A673 (cell line): ENCODE measurements at regions of chr11 and their contacts with region 1.

Region 1: DNA sequence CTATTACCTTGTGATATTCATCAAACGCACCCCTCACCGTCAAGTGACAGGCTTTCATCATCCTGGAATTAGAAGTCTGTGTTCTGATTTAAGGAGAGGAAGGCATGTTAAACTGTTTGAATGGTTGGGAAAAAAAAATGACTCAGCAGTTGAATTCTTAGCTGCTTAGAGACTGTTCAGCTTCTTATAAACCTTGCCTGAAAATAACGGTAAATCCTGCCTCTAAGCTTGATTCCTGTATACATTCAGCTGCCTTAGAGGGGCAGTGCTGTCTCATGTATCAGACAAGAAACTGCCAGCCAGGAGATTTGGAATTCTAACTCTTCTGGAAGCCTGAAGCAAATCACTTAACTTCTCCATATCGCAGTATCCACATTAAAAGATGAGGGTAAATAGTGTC is 437.4 kb downstream of the JRKL start:
- DNase-seq: peak; percentile 26
- H3K4me3 ChIP-seq: no peak overlapping the region
- H3K27ac ChIP-seq: no peak overlapping the region
- H3K4me1 ChIP-seq: no peaks in the 10 kb centered on the region
- H3K27me3 ChIP-seq: no peaks in the 10 kb centered on the region
- CTCF ChIP-seq: peak; percentile 48; the same call in 1 of the 2 replicates

Region 2: DNA sequence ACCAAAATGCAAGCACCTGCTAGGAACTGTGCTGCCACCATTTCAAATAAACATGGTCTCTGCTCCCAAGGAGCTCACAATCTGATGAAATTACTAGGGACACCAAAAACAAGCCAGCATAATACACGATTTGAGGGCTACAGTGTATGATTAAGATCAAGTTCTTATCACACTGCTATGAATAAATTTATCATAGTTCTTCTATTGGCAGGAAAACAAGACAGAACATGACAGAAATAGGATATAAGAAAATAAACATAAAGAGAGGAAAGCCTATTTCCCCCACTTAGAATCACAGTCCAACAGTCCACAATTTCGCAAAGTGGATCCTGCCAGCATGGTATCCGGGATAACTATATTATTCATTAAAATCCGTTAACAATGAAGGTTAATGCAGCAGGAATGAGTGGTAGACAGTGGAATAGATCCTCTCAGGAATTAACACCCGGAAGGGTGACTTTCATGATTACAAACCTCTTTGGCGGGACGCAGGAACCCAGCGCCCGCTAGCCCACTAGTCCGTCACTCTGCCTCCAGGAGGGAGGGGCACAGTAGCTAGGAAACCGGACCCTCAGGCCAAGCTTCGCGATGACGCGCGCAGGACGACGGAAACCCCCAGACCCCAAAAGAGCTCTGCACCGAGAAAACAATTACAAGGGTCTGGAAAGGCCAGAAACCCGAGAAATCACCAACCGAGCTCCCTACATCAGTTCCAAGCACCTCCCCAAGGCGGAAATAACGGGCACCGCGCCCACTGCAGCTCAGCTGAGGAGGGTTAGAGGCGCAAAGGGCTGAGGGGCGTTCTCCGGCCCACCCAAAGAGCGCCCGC is 438.1 kb before region 1 on chr11:
- CTCF ChIA-PET with region 1: no interaction called
- POLR2A ChIA-PET with region 1: no interaction called
- intact Hi-C with region 1: no loop called
- DNase-seq: no peak
- H3K4me3 ChIP-seq: peak overlapping the region; percentile 74
- H3K27ac ChIP-seq: peak overlapping the region; percentile 88
- H3K4me1 ChIP-seq: peaks cover 32% of the 10 kb centered on the region
- H3K27me3 ChIP-seq: no peaks in the 10 kb centered on the region
- CTCF ChIP-seq: no peak

Region 3: GRCh38 chr11:97140885-97141494 is 313.8 kb after region 1 on chr11:
- CTCF ChIA-PET with region 1: no interaction called
- POLR2A ChIA-PET with region 1: no interaction called
- intact Hi-C with region 1: loop called (anchors 2 kb)
- DNase-seq: peak; percentile 53
- H3K4me3 ChIP-seq: no peak overlapping the region
- H3K27ac ChIP-seq: no peak overlapping the region
- H3K4me1 ChIP-seq: no peaks in the 10 kb centered on the region
- H3K27me3 ChIP-seq: no peaks in the 10 kb centered on the region
- CTCF ChIP-seq: peak; percentile 80